ENCODE measurements at regions of chr7 and their contacts with region 1.

Region 1: DNA sequence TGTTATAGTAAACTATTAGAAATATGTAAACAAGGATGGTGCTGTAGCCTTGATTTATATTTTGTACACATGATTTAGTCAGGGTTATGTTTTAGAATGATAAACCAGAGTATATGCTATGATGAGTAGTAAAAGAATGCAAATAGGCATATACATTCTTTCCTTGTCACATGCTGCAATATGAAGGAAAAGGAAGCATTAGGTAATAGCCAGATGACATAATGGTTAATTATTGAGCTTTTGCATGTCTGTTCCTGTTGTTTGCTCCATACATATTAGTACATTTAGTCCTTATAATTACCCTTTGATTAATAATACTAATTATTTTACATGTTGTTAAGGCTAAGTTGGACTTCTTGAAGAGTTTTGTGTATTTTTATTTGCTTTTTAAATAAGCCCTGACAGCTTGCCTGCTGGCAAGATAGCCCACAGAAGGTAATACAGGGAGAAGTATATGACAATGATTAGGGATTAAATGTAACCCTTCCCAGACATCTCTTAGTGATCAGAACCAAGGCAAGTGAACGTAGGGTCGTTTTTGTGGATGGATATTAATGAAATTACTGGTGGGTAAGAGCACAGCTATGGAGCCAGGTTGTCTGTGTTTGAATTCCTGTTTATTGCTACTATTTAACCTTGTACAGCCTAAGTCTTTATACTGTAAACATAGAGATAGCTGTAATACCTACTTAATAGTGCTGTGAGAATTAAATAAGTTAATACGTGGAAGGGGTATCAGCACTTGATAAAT is 68.4 kb downstream of the PHTF2 start:
- DNase-seq: peak; percentile 58
- H3K4me3 ChIP-seq: no peak overlapping the region
- H3K27ac ChIP-seq: peak overlapping the region; percentile 36
- H3K4me1 ChIP-seq: peaks cover 18% of the 10 kb centered on the region
- H3K27me3 ChIP-seq: no peaks in the 10 kb centered on the region
- CTCF ChIP-seq: no peak

Region 2: GRCh38 chr7:77716804-77717203 is 150.2 kb before region 1 on chr7:
- CTCF ChIA-PET with region 1: no interaction called
- dilution Hi-C with region 1: no loop called
- in situ Hi-C with region 1: no loop called
- intact Hi-C with region 1: no loop called
- DNase-seq: no peak
- H3K4me3 ChIP-seq: no peak overlapping the region
- H3K27ac ChIP-seq: no peak overlapping the region
- H3K4me1 ChIP-seq: peaks cover 14% of the 10 kb centered on the region
- H3K27me3 ChIP-seq: no peaks in the 10 kb centered on the region
- CTCF ChIP-seq: no peak

Region 3: GRCh38 chr7:77830649-77831355 is 36.2 kb before region 1 on chr7:
- CTCF ChIA-PET with region 1: no interaction called
- dilution Hi-C with region 1: no loop called
- in situ Hi-C with region 1: no loop called
- intact Hi-C with region 1: loop called (anchors 1 kb)
- DNase-seq: no peak
- H3K4me3 ChIP-seq: no peak overlapping the region
- H3K27ac ChIP-seq: no peak overlapping the region
- H3K4me1 ChIP-seq: peaks cover 12% of the 10 kb centered on the region
- H3K27me3 ChIP-seq: no peaks in the 10 kb centered on the region
- CTCF ChIP-seq: no peak

Region 4: GRCh38 chr7:78033410-78033809 is 166.4 kb after region 1 on chr7:
- CTCF ChIA-PET with region 1: no interaction called
- dilution Hi-C with region 1: no loop called
- in situ Hi-C with region 1: no loop called
- intact Hi-C with region 1: no loop called
- DNase-seq: no peak
- H3K4me3 ChIP-seq: no peak overlapping the region
- H3K27ac ChIP-seq: no peak overlapping the region
- H3K4me1 ChIP-seq: no peaks in the 10 kb centered on the region
- H3K27me3 ChIP-seq: no peaks in the 10 kb centered on the region
- CTCF ChIP-seq: no peak

Measured in mammary epithelial cell (primary cell).